ENCODE measurements at regions of chr1 and their contacts with region 1.

Region 1: GRCh38 chr1:20194757-20195461 is 8.6 kb upstream of the PLA2G2C start:
- DNase-seq: peak; percentile 78
- H3K4me3 Mint-ChIP-seq: no peak overlapping the region
- H3K27ac Mint-ChIP-seq: no peak overlapping the region
- H3K4me1 Mint-ChIP-seq: peaks cover 3% of the 10 kb centered on the region
- H3K27me3 Mint-ChIP-seq: peaks cover 30% of the 10 kb centered on the region

Region 2: DNA sequence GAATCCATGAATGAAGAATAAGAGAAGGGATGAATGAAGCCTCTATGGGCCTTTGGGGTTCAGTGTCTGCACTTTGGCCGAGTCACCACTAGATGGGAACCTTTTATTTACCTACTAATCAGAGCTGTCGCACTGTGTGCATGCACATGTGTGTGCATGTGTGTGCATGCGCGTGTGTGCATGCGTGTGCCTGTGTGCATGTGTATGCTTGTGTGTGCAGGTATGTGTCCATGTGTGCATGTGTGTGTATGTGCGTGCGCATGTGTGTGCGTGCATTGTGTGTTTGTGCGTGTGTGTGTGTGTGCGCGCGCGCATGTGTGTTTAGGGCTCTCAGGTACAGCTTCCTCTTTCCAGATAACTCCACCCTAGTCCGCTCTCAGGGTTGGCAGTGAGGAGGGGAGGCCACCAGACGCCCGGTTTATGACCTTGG is 29.4 kb before region 1 on chr1:
- CTCF ChIA-PET with region 1: interaction called, 41 read pairs
- POLR2A ChIA-PET with region 1: no interaction called
- DNase-seq: peak; percentile 30
- H3K4me3 Mint-ChIP-seq: no peak overlapping the region
- H3K27ac Mint-ChIP-seq: no peak overlapping the region
- H3K4me1 Mint-ChIP-seq: no peaks in the 10 kb centered on the region
- H3K27me3 Mint-ChIP-seq: peaks cover 3% of the 10 kb centered on the region

Measured in activated CD4-positive, alpha-beta memory T cell treated with anti-CD3 and anti-CD28 coated beads, Interleukin-2, amount 10 ng/mL, durations not matched to agents 7 days and 5 days (primary cell).